ENCODE measurements at regions of chrX and their contacts with region 1.

Region 1: GRCh38 chrX:46408553-46409407 is 136.4 kb downstream of the ZNF674 start:
- H3K4me3 ChIP-seq: no peak overlapping the region
- H3K27ac ChIP-seq: no peak overlapping the region
- H3K4me1 ChIP-seq: no peaks in the 10 kb centered on the region
- CTCF ChIP-seq: 0 out of 2 replicates have a peak, but pooled peaks have one; percentile 19

Region 2: DNA sequence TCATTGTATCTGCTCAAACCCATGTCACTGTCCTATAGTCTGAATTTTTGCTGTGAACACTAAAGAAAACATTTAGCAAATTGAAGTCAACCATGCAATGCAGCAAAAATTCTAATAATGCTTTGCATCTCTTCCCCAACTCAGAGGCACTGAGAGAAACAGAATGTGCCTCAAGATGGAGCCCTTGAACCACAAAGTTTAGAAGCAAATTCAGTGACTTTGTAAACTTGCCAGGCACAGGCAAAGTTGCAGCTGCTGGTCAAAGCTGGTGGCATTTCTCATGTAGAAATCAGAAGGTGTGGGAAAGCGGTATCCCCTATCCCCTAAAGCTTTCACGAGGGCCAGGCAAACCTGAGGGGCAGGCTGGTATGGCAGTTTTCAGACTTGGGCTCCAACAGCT is 1086.4 kb before region 1 on chrX:
- CTCF ChIA-PET with region 1: interaction called, 22 read pairs
- POLR2A ChIA-PET with region 1: no interaction called
- H3K4me3 ChIP-seq: no peak overlapping the region
- H3K27ac ChIP-seq: no peak overlapping the region
- H3K4me1 ChIP-seq: no peaks in the 10 kb centered on the region
- CTCF ChIP-seq: 0 out of 2 replicates have a peak, but pooled peaks have one; percentile 21

Region 3: DNA sequence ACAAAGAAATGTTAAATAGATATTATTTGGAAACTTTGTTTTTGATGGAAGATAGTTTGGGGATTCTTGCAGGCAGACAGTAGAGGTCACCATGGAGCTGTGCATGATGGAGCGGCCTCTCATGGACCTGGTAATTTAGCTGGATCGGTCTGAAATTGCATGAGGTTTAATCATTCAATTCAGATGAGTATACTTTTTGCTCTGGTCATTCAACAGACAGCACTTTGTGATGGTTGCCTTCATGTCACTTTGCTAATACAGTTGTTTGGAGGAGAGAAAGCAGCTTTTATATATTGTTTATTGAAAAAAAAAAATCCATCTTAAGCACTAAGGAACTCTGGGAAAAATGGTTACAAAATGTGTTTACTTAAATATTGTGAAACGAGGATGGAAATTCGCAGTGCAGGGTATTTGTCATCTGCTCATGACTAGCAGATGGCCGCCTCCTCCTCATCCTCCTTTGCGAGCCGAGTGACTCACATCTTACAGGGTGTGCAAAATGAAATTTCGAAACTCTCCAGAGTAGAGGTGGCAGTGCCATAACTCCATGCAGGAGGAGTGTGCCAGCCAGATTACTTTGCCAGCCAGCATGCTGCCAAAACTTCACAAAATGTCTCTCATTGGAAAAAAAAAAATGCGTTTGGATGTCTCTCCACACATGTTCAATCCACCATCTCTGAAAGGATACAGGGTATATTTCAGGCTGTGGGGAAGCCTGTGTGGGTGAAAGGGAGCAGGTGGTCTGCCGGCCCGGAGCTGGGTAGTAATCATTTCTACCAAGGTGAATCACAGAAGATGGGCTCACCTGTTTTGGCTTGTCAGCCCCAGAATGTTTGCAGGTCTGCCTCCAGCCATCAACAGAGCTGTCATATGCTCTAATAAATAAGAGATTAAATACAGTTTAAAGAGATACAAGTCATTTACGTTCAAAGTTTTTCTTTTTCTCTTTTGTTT is 893.2 kb before region 1 on chrX:
- CTCF ChIA-PET with region 1: interaction called, 21 read pairs
- POLR2A ChIA-PET with region 1: no interaction called
- H3K4me3 ChIP-seq: no peak overlapping the region
- H3K27ac ChIP-seq: no peak overlapping the region
- H3K4me1 ChIP-seq: no peaks in the 10 kb centered on the region
- CTCF ChIP-seq: 0 out of 2 replicates have a peak, but pooled peaks have one; percentile 24

Region 4: DNA sequence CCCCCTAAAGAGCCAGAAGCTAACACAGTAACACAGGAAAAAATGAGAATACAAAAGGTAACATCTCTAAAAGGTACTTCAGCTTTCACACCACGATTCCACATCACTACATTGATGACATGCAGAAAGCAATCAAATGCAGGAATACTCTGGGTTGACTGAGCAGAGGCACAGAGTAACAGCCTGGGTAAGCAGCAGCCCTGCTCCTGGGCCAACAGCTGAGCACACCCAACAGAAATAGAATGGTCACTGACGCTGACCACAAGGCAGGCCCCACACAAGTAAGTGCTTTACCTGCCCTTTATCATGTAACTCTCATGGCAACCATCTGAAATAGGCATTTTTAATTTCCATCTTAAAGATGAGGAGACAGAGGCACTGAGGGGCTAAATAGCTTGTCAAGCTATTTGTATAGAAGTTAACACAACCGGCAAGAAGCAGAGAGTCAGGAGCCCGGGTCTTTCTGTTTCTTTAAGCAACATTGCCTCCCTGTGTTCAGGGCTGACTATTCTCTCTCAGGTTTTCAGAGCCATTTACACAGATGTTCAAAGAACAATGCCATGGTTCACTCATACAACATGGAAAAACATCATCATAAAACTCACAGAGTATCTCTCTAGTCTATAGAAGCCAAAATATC is 32.4 kb before region 1 on chrX:
- CTCF ChIA-PET with region 1: interaction called, 13 read pairs
- POLR2A ChIA-PET with region 1: no interaction called
- H3K4me3 ChIP-seq: no peak overlapping the region
- H3K27ac ChIP-seq: no peak overlapping the region
- H3K4me1 ChIP-seq: no peaks in the 10 kb centered on the region
- CTCF ChIP-seq: no peak

Region 5: DNA sequence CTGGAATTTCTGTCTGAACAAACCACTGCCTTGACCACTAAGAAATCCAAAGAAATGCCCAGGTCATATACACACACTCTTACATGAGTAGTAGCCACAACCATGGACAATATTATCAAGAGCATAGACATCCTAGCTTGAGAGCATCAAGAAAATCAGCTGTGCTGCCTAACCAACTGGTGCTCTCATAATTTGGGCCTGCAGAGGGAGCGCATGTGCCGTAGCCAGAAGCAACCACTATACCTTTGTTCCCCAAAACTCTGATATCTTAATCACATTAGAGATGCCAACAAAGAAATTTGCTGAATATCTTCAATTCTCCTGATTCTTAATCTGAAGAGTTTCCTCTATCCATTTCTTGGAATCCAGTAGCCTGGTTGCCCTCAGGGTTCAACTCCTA is 27.1 kb before region 1 on chrX:
- CTCF ChIA-PET with region 1: interaction called, 14 read pairs
- POLR2A ChIA-PET with region 1: no interaction called
- H3K4me3 ChIP-seq: no peak overlapping the region
- H3K27ac ChIP-seq: no peak overlapping the region
- H3K4me1 ChIP-seq: no peaks in the 10 kb centered on the region
- CTCF ChIP-seq: no peak